ENCODE measurements at regions of chr17 and their contacts with region 1.

Region 1: DNA sequence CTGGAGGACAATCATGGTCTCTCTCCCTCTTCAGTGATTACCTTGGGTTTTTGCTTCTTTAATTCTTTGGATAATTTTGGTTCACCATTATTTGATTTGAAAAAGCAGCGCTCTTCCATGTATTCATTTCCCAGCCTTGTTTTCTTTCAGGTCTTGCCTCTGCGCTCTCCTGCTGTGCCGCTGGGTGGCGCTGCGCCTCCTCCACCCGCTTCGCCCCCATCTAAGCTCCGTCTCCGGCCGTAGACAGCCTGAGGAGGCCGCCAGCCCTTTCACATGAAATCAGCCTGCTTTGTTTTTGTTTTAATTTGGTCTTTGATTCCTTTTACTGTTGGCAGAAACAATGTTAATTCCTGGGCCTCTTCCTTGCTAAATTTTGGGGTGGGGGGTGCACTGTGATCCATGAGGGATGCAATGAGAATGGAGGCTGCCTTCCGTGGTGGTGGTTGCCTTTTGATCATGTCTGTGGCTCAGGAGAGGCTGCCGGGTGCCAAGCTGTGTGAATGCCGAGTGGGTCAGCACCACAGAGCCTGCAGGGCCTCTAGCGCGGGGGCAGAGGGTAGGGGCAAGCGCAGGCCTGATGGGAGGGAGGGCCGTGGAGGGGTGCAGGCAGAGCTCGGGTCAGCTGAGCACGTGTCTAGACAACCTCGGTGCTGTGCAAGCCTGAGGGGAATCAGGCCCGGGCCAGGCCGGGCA is 64.1 kb downstream of the PLD6 start:
- DNase-seq: no peak
- H3K4me3 ChIP-seq: no peak overlapping the region
- H3K27me3 ChIP-seq: no peaks in the 10 kb centered on the region
- CTCF ChIP-seq: peak; percentile 91

Region 2: DNA sequence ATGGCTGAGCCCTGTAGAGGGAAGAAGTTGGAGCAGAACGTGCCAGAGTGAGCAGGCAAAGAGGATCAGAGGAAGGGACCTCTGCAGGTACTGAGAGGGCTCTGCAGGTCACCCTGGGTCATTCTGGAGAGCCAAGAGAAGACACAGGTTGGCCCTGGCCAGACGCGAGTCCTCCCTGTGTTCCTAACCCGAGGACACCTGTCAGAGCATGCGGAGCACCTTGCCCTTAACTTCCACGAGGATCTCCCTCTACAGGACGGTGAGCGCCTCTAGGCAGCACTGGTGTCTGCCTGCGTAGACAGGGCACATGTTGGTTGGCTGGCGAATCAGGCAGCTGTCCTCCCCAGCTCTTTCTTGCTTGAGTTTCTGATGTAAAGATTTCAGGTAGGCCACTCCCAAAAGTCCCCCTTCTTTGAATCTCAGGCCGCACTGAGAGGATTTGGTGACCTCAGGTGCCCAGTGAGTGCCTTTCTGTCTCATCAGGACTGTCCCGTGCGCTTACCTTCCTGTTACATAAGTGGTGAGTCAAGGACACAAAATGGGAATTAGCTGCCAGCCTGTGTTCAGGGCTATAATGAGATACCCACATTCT is 54.5 kb before region 1 on chr17:
- CTCF ChIA-PET with region 1: no interaction called
- POLR2A ChIA-PET with region 1: no interaction called
- DNase-seq: no peak
- H3K4me3 ChIP-seq: no peak overlapping the region
- H3K27me3 ChIP-seq: no peaks in the 10 kb centered on the region
- CTCF ChIP-seq: no peak

Region 3: DNA sequence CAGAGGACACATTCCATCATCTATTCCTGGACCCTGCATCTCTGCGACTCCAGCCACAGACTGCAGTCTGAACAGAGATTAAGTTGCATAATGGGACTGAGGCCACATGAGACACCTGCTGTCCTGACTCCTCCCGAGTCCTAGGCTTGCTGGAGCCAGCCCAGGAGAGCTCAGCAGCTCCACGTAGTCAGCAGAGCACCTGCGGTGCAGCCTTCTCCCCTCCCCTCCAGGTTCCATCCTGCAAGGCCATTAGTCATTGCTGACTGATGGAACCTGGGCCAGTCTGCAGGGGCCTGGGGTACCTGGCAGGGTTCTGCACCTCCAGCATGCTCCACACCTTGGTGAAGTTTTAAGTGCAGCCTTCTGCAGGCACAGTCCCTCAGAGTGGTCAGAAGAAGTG is 12.5 kb before region 1 on chr17:
- CTCF ChIA-PET with region 1: interaction called, 11 read pairs
- POLR2A ChIA-PET with region 1: no interaction called
- DNase-seq: no peak
- H3K4me3 ChIP-seq: no peak overlapping the region
- H3K27me3 ChIP-seq: no peaks in the 10 kb centered on the region
- CTCF ChIP-seq: no peak

Region 4: DNA sequence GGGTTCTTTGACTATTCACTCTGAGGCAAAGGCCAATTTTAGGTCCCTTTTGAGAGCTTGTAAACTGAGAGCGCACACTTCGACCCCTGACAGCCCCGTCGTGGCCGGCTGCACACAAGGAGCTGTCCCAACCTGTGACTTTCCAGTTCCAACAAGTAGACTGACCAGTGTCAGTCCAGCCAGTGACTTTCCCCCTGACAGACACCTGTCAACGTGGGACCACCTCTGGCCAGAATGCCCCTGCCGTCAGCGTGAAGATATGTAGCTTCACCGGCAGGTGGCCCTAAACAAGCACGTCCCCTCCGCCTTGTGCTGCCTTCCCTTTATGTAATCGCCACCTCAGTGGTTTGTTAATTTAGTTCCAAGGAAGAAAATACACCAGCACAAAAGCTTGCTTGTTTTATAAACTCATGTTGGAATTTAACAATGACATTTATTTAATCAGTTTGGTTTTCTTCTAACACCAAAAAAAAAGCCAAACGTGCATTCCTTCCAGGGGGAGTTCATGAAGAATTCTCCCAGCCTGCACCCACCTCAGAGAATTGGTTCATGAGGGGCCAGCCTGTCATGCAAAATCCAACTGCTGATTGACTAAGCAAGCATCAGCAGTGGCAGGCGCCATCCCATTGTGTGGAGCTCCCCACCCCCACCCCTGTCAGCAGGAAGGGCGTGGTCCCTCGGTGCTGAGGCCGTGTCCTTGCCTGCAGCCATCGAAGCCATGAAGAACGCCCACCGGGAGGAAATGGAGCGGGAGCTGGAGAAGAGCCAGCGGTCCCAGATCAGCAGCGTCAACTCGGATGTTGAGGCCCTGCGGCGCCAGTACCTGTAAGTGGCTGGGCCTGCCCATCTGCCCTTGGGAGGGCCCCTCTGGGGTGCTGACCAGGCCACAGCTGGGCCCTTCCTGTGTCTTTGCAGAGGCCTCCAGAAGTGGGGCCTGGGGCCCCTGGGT is 30.3 kb after region 1 on chr17:
- CTCF ChIA-PET with region 1: no interaction called
- POLR2A ChIA-PET with region 1: no interaction called
- DNase-seq: no peak
- H3K4me3 ChIP-seq: no peak overlapping the region
- H3K27me3 ChIP-seq: no peaks in the 10 kb centered on the region
- CTCF ChIP-seq: no peak